ENCODE measurements at regions of chr2 and their contacts with region 1.

Region 1: GRCh38 chr2:50143822-50144575 is 887.9 kb downstream of the NRXN1 start:
- DNase-seq: no peak
- H3K4me3 ChIP-seq: peak overlapping the region; percentile 43 to 54
- H3K27ac ChIP-seq: no peak overlapping the region
- H3K4me1 ChIP-seq: no peaks in the 10 kb centered on the region
- H3K27me3 ChIP-seq: no peaks in the 10 kb centered on the region
- CTCF ChIP-seq: peak; percentile 18 to 58 (median 43)

Region 2: GRCh38 chr2:49687918-49688317 is 456.1 kb before region 1 on chr2:
- intact Hi-C with region 1: loop called (anchors 10 kb)
- DNase-seq: no peak
- H3K4me3 ChIP-seq: no peak overlapping the region
- H3K27ac ChIP-seq: no peak overlapping the region
- H3K4me1 ChIP-seq: no peaks in the 10 kb centered on the region
- H3K27me3 ChIP-seq: no peaks in the 10 kb centered on the region
- CTCF ChIP-seq: peak in 2 of 3 experiments; percentile 13 to 37

Region 3: GRCh38 chr2:49719241-49719640 is 424.8 kb before region 1 on chr2:
- intact Hi-C with region 1: no loop called
- DNase-seq: no peak
- H3K4me3 ChIP-seq: no peak overlapping the region
- H3K27ac ChIP-seq: no peak overlapping the region
- H3K4me1 ChIP-seq: no peaks in the 10 kb centered on the region
- H3K27me3 ChIP-seq: no peaks in the 10 kb centered on the region
- CTCF ChIP-seq: no peak

Region 4: DNA sequence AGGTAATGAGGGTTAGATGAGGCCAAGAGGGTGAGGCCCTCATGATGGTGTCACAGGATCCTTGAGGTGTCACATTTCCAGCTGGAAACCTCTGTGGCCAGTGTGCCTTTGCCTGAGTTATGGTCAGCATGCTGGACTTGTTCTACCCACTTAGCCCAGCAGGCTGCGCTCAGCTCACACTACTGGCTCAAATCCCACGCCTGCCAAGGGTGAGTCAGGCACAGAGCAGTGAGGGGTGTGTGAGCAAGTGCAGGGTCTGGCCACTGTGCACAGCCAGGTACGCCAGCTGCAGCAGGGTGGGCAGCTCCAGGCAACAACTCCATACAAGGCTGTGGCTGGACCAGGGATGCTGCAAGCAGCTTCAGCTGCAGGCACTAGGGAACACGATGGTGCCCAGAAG is 373.1 kb before region 1 on chr2:
- intact Hi-C with region 1: loop called (anchors 2 kb)
- DNase-seq: no peak
- H3K4me3 ChIP-seq: no peak overlapping the region
- H3K27ac ChIP-seq: no peak overlapping the region
- H3K4me1 ChIP-seq: no peaks in the 10 kb centered on the region
- H3K27me3 ChIP-seq: no peaks in the 10 kb centered on the region
- CTCF ChIP-seq: peak in 2 of 3 experiments; percentile 7 to 48

Region 5: GRCh38 chr2:50167271-50167670 is 23.3 kb after region 1 on chr2:
- intact Hi-C with region 1: no loop called
- DNase-seq: no peak
- H3K4me3 ChIP-seq: no peak overlapping the region
- H3K27ac ChIP-seq: no peak overlapping the region
- H3K4me1 ChIP-seq: no peaks in the 10 kb centered on the region
- H3K27me3 ChIP-seq: no peaks in the 10 kb centered on the region
- CTCF ChIP-seq: no peak

Measured in ascending aorta (tissue), 2 donors.